Endothelial cell of umbilical vein (primary cell): ENCODE measurements at regions of chr9 and their contacts with region 1.

Region 1: DNA sequence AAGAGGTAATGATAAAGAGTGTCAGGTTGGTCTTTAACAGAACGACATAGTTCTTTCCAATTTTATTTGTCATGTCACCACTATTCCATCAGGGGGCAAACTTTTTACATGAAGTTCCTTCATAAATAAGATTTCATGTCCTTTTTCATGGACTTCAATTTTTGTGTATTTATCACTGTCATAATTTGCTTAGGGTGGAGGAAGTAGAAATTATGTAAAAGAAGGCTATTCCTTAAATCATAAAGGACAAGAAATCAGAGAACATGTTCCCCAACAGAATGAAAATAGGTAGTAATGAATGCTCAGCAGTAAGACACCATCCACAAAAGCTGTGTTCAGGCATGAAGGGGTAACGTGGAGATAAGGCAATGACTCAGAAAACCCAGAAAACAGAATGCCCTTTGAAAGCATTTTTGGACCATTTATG is 72.7 kb downstream of the ZFAND5 start:
- DNase-seq: peak; percentile 58
- H3K4me3 ChIP-seq: no peak overlapping the region
- H3K27ac ChIP-seq: no peak overlapping the region
- H3K4me1 ChIP-seq: no peaks in the 10 kb centered on the region
- H3K27me3 ChIP-seq: peaks cover 2% of the 10 kb centered on the region in 2 experiments
- CTCF ChIP-seq: peak; percentile 11 to 20
- POLR2A ChIP-seq: no peak

Region 2: GRCh38 chr9:72082536-72082935 is 209.7 kb before region 1 on chr9:
- CTCF ChIA-PET with region 1: no interaction called
- POLR2A ChIA-PET with region 1: no interaction called
- dilution Hi-C with region 1: no loop called
- intact Hi-C with region 1: no loop called
- DNase-seq: no peak
- H3K4me3 ChIP-seq: no peak overlapping the region
- H3K27ac ChIP-seq: no peak overlapping the region
- H3K4me1 ChIP-seq: no peaks in the 10 kb centered on the region
- H3K27me3 ChIP-seq: no peaks in the 10 kb centered on the region
- CTCF ChIP-seq: no peak
- POLR2A ChIP-seq: no peak

Region 3: GRCh38 chr9:72149231-72149975 is 142.9 kb before region 1 on chr9 and contains the start of gene GDA:
- CTCF ChIA-PET with region 1: no interaction called
- POLR2A ChIA-PET with region 1: no interaction called
- dilution Hi-C with region 1: no loop called
- intact Hi-C with region 1: no loop called
- DNase-seq: no peak
- H3K4me3 ChIP-seq: no peak within 1 kb of the TSS
- H3K27ac ChIP-seq: no peak within 1 kb of the TSS
- H3K4me1 ChIP-seq: no peaks in the 10 kb centered on the region
- H3K27me3 ChIP-seq: peaks cover 8 to 11% of the 10 kb centered on the region in 2 experiments
- CTCF ChIP-seq: no peak
- POLR2A ChIP-seq: no peak
- total RNA-seq, gene GDA: not detected in 2 replicates

Region 4: GRCh38 chr9:72271613-72272478 is 20.4 kb before region 1 on chr9:
- CTCF ChIA-PET with region 1: interaction called, 73 read pairs
- POLR2A ChIA-PET with region 1: no interaction called
- dilution Hi-C with region 1: no loop called
- intact Hi-C with region 1: no loop called
- DNase-seq: peak; percentile 48
- H3K4me3 ChIP-seq: no peak overlapping the region
- H3K27ac ChIP-seq: no peak overlapping the region
- H3K4me1 ChIP-seq: no peaks in the 10 kb centered on the region
- H3K27me3 ChIP-seq: peaks cover 2 to 4% of the 10 kb centered on the region in 2 experiments
- CTCF ChIP-seq: peak; percentile 74 to 79
- POLR2A ChIP-seq: no peak

Region 5: DNA sequence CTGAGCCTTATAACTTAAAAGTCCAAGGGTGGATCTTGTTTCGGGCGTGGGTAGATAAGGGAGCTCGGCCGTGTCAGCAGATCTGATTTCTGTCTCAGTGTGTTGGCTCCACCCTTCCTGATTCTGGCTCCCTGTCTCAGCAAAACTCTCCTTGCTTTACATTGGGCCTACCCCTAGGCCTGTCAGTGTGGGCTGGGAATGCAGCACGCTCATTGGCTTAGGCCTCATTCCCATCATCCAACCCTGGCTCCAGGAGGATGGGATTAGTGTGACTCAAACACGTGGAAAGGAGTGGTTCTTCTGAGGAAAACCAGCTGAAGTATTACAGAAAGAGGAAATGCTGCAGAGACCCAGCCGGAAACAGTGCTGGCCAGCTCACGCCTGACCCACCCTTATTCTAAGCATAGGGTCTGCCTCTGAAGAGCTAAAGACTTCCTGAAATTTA is 12.9 kb after region 1 on chr9:
- CTCF ChIA-PET with region 1: interaction called, 10 read pairs
- POLR2A ChIA-PET with region 1: no interaction called
- dilution Hi-C with region 1: no loop called
- intact Hi-C with region 1: no loop called
- DNase-seq: peak; percentile 95
- H3K4me3 ChIP-seq: peak overlapping the region in 2 of 3 experiments; percentile 8 to 53
- H3K27ac ChIP-seq: peak overlapping the region; percentile 53
- H3K4me1 ChIP-seq: peaks cover 7% of the 10 kb centered on the region
- H3K27me3 ChIP-seq: no peaks in the 10 kb centered on the region
- CTCF ChIP-seq: no peak
- POLR2A ChIP-seq: peak; percentile 50

Region 6: DNA sequence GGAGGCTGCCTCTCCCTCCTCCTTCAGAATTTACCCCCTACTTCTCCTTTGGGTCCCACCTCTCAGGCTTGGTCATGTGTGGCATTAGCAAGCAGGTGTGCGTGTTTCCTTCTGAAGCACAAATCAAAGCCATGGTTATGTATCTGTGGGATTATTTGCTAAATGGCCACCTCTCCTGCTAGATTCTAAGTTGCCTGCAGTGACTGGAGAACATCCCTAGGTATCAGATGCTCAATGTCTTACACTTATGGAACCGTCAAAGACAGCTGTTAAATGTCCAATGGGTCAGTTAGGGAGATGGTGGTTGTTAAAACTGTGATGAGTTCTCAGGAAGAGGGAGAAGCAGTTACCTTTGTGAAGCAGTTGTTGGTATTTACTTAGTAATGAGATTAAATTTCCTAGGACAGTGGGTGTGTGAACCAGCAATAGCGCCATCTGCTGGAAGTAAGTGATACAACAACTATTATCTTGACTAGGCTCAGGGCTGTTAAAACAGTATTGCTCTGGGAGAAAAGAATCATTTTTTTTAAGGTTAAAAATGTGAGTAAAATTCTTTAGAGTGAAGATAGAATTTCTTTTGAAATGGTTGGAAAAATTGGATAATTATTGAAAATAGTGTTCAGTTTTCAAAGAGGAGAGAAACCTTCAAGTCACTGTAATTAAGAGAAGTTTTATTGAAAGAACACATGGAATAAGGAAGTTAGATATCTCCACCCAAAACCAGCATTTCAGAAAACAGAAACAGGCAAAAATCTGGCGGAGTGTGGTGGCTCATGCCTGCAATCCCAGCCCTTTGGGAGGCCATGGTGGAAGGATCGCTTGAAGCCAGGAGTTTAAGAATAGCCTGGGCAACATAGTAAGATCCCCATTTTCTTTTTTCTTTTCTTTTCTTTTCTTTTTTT is 300.5 kb after region 1 on chr9:
- CTCF ChIA-PET with region 1: interaction called, 15 read pairs
- POLR2A ChIA-PET with region 1: no interaction called
- dilution Hi-C with region 1: no loop called
- intact Hi-C with region 1: loop called (anchors 1 kb)
- DNase-seq: peak; percentile 79
- H3K4me3 ChIP-seq: no peak overlapping the region
- H3K27ac ChIP-seq: no peak overlapping the region
- H3K4me1 ChIP-seq: no peaks in the 10 kb centered on the region
- H3K27me3 ChIP-seq: no peaks in the 10 kb centered on the region
- CTCF ChIP-seq: peak; percentile 47 to 57
- POLR2A ChIP-seq: no peak

Region 7: DNA sequence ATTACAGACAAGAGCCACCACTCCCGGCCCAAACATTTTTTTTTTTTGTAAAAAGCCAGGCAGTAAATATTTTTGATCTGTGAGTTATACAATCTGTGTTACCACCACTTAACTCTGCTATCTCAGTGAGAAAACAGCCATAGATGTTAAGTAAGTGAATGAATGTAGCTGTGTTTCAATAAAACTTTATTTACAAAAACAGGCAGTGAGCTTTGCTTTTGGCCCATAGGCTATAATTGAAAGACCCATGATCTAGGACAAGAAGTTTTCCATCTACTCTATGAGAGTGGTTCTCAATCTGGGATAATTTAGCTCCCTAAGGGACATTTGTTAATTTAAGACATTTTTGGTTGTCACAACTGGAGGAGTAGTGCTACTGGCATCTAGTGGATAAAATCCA is 320.2 kb after region 1 on chr9:
- CTCF ChIA-PET with region 1: interaction called, 12 read pairs
- POLR2A ChIA-PET with region 1: no interaction called
- dilution Hi-C with region 1: no loop called
- intact Hi-C with region 1: no loop called
- DNase-seq: no peak
- H3K4me3 ChIP-seq: no peak overlapping the region
- H3K27ac ChIP-seq: no peak overlapping the region
- H3K4me1 ChIP-seq: no peaks in the 10 kb centered on the region
- H3K27me3 ChIP-seq: no peaks in the 10 kb centered on the region
- CTCF ChIP-seq: no peak
- POLR2A ChIP-seq: no peak

Region 8: GRCh38 chr9:72818385-72818784 is 526.1 kb after region 1 on chr9:
- CTCF ChIA-PET with region 1: interaction called, 56 read pairs
- POLR2A ChIA-PET with region 1: no interaction called
- dilution Hi-C with region 1: no loop called
- intact Hi-C with region 1: loop called (anchors 1 kb)
- DNase-seq: no peak
- H3K4me3 ChIP-seq: no peak overlapping the region
- H3K27ac ChIP-seq: no peak overlapping the region
- H3K4me1 ChIP-seq: peaks cover 4% of the 10 kb centered on the region
- H3K27me3 ChIP-seq: peaks cover 0 to 4% of the 10 kb centered on the region in 2 experiments
- CTCF ChIP-seq: no peak
- POLR2A ChIP-seq: no peak